IMR-90 (cell line): ENCODE measurements at regions of chr1 and their contacts with region 1.

Region 1: GRCh38 chr1:229341774-229342655 is 832 bp downstream of the CCSAP start:
- DNase-seq: peak; percentile 57
- ATAC-seq: peak; percentile 92
- H3K4me3 ChIP-seq: peak overlapping the region; percentile 78
- H3K27ac ChIP-seq: peak overlapping the region; percentile 77
- H3K4me1 ChIP-seq: peaks cover 2% of the 10 kb centered on the region; the same call in 1 of the 2 replicates
- H3K27me3 ChIP-seq: peaks cover 5% of the 10 kb centered on the region; the same call in 1 of the 2 replicates
- CTCF ChIP-seq: no peak
- POLR2A ChIP-seq: no peak
- RAD21 ChIP-seq: no peak

Region 2: GRCh38 chr1:229046251-229046853 is 295.7 kb before region 1 on chr1:
- CTCF ChIA-PET with region 1: no interaction called
- POLR2A ChIA-PET with region 1: no interaction called
- dilution Hi-C with region 1: no loop called
- in situ Hi-C with region 1: no loop called
- intact Hi-C with region 1: no loop called
- DNase-seq: no peak
- ATAC-seq: no peak
- H3K4me3 ChIP-seq: no peak overlapping the region
- H3K27ac ChIP-seq: no peak overlapping the region
- H3K4me1 ChIP-seq: no peaks in the 10 kb centered on the region
- H3K27me3 ChIP-seq: peaks cover 10% of the 10 kb centered on the region; the same call in 1 of the 2 replicates
- CTCF ChIP-seq: no peak
- POLR2A ChIP-seq: no peak
- RAD21 ChIP-seq: no peak

Region 3: GRCh38 chr1:229408458-229409037 is 66.5 kb after region 1 on chr1:
- CTCF ChIA-PET with region 1: no interaction called
- POLR2A ChIA-PET with region 1: no interaction called
- dilution Hi-C with region 1: no loop called
- in situ Hi-C with region 1: no loop called
- intact Hi-C with region 1: loop called (anchors 5 kb)
- DNase-seq: peak; percentile 7
- ATAC-seq: peak; percentile 60
- H3K4me3 ChIP-seq: no peak overlapping the region
- H3K27ac ChIP-seq: no peak overlapping the region
- H3K4me1 ChIP-seq: peaks cover 7% of the 10 kb centered on the region; the same call in 1 of the 2 replicates
- H3K27me3 ChIP-seq: peaks cover 36% of the 10 kb centered on the region
- CTCF ChIP-seq: no peak
- POLR2A ChIP-seq: no peak
- RAD21 ChIP-seq: no peak

Region 4: GRCh38 chr1:230153641-230154296 is 811.8 kb after region 1 on chr1:
- CTCF ChIA-PET with region 1: no interaction called
- POLR2A ChIA-PET with region 1: no interaction called
- dilution Hi-C with region 1: no loop called
- in situ Hi-C with region 1: no loop called
- intact Hi-C with region 1: no loop called
- DNase-seq: peak; percentile 61
- ATAC-seq: no peak; the same call in none of the 2 replicates
- H3K4me3 ChIP-seq: no peak overlapping the region
- H3K27ac ChIP-seq: no peak overlapping the region
- H3K4me1 ChIP-seq: peaks cover 13% of the 10 kb centered on the region
- H3K27me3 ChIP-seq: no peaks in the 10 kb centered on the region
- CTCF ChIP-seq: no peak
- POLR2A ChIP-seq: no peak
- RAD21 ChIP-seq: no peak